Activated CD4-positive, alpha-beta memory T cell treated with anti-CD3 and anti-CD28 coated beads, Interleukin-2, amount 10 ng/mL, durations not matched to agents 7 days and 5 days (primary cell): ENCODE measurements at regions of chr19 and their contacts with region 1.

Region 1: DNA sequence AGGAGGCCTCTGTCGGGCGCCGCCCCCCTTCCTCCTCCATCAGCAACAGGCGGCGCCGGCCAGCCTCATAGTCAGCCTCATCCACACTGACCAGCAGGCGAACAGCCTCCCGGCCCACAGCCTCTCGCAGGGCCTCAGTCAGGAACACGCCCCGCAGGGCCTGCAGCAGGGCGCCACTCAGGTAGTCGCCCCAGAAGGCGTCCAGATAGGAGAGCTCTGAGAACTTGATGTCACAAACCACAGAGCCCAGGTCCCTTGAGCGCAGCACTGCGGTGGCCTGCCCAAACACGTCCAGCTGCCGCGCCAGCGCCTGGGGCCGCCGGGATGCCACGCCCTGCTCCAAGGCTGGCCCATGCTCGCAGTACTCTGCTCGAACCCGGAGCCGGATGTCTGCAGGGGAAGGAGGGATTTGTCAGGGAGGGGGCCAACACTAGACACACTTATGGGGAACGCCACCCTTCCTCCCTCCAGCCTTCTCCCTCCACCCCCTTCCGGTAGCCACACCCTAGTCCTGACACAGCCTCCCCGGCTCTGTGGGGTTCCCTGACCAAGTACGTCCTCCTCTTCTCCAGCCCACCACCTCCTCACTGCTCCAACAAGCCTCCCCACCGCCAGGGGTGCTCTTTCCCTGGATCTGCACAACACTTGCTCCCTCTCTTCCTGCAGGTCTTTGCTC is 17.9 kb downstream of the DEDD2 start:
- DNase-seq: peak; percentile 91
- H3K4me3 Mint-ChIP-seq: peak overlapping the region; percentile 72
- H3K27ac Mint-ChIP-seq: peak overlapping the region; percentile 98
- H3K4me1 Mint-ChIP-seq: peaks cover 86% of the 10 kb centered on the region
- H3K27me3 Mint-ChIP-seq: no peaks in the 10 kb centered on the region

Region 2: GRCh38 chr19:42176990-42177685 is 22.4 kb before region 1 on chr19:
- CTCF ChIA-PET with region 1: interaction called, 7 read pairs
- POLR2A ChIA-PET with region 1: interaction called, 14 read pairs
- DNase-seq: peak; percentile 81
- H3K4me3 Mint-ChIP-seq: no peak overlapping the region
- H3K27ac Mint-ChIP-seq: no peak overlapping the region
- H3K4me1 Mint-ChIP-seq: peaks cover 19% of the 10 kb centered on the region
- H3K27me3 Mint-ChIP-seq: peaks cover 30% of the 10 kb centered on the region

Region 3: DNA sequence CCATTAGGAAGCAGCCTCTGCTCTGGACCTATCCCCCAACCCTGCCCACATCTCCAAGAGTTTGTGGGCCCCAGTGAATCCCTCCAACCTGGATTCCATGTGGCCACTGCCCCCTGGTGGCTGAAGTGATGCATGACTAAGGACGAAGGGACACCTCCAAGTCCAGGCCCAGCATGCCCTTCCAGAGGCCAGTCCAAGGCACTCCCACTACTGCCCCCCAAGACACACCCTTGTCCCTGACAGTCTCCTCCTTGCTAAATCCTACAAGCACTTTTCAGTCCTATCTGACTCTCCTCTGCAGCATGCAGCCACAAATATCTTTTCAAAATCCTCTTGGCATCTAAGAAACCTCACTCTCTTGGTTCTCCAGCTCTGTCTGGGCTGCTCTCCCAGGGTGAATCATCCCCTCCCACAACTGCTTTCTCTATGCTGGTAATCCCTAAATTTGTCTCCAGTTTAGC is 15.1 kb before region 1 on chr19:
- CTCF ChIA-PET with region 1: interaction called, 23 read pairs
- POLR2A ChIA-PET with region 1: interaction called, 82 read pairs
- DNase-seq: peak; percentile 72
- H3K4me3 Mint-ChIP-seq: peak overlapping the region; percentile 7
- H3K27ac Mint-ChIP-seq: peak overlapping the region; percentile 89
- H3K4me1 Mint-ChIP-seq: peaks cover 57% of the 10 kb centered on the region
- H3K27me3 Mint-ChIP-seq: no peaks in the 10 kb centered on the region

Region 4: GRCh38 chr19:42268704-42269477 is 69.3 kb after region 1 on chr19 and contains the start of gene CIC:
- CTCF ChIA-PET with region 1: no interaction called
- POLR2A ChIA-PET with region 1: interaction called, 15 read pairs
- DNase-seq: peak; percentile 99
- H3K4me3 Mint-ChIP-seq: no peak within 1 kb of the TSS
- H3K27ac Mint-ChIP-seq: peak within 1 kb of the TSS; percentile 99
- H3K4me1 Mint-ChIP-seq: peaks cover 32% of the 10 kb centered on the region
- H3K27me3 Mint-ChIP-seq: no peaks in the 10 kb centered on the region
- total RNA-seq, gene CIC: 86.5 to 88.8 TPM